Posterior vena cava (tissue), 2 donors: ENCODE measurements at regions of chr7 and their contacts with region 1.

Region 1: DNA sequence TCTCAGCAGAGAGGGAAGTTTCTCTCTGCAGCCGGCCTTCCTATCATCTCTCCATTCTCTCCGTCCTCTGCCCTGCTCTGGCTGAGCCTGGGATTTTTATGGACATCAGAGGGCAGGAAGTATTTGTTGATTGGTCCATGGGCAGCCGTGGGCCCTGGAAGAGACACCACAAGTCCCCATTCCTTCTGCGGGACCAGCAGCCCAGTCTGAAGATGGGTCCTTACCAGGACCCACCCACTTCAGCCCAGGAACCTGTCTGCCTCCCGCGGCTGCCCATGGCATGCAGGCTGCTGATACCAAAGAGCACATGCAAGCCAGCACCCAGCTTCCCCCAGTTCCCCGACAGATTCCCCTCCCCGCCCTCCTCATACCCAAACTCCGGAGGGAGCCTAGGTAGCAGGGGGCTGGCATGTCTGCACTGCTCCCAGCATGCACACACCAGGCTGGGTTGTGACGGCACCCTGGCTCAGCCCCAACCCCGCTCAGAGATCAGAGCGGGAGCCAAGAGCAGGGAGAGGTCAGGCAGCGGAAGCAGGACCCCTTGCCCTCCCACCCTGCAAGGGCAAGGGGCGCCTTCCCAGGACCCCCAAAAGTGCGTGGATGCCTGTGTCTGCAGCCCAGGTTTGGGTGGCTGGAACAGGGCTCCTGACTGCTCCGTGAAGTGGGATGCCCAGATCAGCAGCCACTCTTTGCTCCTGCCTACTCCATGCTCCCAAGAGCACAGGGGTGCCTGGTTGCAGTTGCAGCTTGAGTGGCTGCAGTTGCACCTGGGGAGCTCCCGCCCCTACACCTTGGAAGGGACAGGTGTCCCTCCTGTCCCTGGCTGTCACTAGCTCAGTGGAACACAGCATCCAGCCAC is 538.6 kb upstream of the POT1 start:
- DNase-seq: no peak

Region 2: GRCh38 chr7:124723012-124723411 is 745.2 kb before region 1 on chr7:
- intact Hi-C with region 1: no loop called
- DNase-seq: no peak

Region 3: GRCh38 chr7:125383324-125383723 is 84.9 kb before region 1 on chr7:
- intact Hi-C with region 1: no loop called
- DNase-seq: no peak

Region 4: DNA sequence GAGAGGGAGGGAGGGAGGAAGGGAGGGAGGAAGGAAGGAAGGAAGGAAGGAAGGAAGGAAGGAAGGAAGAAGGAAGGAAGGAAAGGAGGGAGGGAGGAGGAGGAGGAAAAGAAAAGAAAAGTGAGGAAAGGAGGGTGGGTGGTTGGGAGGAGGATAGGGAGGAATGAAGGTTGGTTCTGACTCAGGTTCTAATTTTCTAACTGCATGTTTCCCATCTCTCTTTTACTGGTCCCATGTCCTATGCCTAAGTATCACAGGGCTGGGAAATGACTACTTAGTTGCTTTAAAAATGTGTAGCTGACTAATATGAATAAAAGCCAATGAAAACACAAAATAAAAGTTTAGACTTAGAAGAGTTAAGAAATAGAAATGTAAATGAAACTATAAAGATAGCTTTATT is 352.3 kb after region 1 on chr7:
- intact Hi-C with region 1: loop called in 1 of 2 experiments (anchors 5 kb)
- DNase-seq: no peak